ENCODE measurements at regions of chr2 and their contacts with region 1.

Region 1: DNA sequence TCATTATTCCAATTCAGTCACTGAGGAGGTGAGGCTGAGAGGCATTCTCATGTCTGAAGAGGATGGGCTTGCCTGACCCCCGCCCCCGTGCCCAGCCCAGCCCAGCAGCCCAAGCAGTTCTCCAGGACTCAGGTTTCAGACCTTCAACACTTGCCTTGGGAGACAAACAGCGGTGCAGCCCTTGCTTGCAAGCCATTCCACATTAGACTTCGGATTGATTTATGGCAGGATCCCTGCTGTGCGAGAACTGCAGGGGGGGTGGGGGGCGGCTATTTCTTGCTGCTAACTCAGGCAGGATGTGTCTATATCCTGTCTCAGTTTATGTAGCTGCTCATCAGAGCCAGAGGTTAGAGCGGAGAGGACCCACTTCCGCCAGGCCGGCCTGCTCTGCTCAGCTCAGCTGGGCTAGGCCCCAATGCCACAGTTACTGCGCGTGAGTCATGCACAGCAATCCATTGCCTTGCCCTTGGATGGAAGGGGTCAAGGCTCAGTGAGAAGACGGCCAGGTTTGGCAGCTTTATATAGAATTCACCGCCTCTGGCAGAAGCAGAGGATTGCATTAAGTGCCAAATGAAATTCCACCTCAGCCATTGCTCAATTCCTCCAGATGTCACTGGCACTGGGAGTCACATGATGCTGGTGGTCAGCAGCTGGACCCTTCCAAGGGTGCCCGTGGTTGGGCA is 1.8 kb downstream of the GYPC start:
- DNase-seq: peak; percentile 87
- H3K4me3 Mint-ChIP-seq: peak overlapping the region; percentile 85
- H3K27ac Mint-ChIP-seq: peak overlapping the region; percentile 93
- H3K4me1 Mint-ChIP-seq: peaks cover 60% of the 10 kb centered on the region
- H3K27me3 Mint-ChIP-seq: no peaks in the 10 kb centered on the region

Region 2: DNA sequence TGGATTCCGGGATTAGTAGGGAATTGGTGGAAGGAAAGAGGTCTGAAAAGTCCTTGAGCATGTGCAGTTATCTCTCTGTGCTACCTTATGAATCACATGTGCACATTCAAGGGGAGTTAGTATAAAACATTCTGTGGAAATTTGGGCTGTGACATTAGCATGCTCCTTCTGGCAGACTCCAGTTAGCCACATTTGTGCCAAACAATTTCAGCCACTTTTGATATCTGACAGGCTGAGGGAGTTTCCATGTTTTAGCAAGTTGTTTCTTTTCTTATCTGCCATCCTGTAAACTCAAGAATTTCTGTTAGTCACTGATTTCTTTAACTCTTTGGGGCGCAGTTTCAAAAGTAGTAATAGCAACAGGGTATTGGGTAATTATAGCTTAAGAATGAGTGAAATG is 30.1 kb before region 1 on chr2:
- CTCF ChIA-PET with region 1: no interaction called
- POLR2A ChIA-PET with region 1: no interaction called
- DNase-seq: no peak
- H3K4me3 Mint-ChIP-seq: no peak overlapping the region
- H3K27ac Mint-ChIP-seq: no peak overlapping the region
- H3K4me1 Mint-ChIP-seq: no peaks in the 10 kb centered on the region
- H3K27me3 Mint-ChIP-seq: peaks cover 22% of the 10 kb centered on the region

Region 3: DNA sequence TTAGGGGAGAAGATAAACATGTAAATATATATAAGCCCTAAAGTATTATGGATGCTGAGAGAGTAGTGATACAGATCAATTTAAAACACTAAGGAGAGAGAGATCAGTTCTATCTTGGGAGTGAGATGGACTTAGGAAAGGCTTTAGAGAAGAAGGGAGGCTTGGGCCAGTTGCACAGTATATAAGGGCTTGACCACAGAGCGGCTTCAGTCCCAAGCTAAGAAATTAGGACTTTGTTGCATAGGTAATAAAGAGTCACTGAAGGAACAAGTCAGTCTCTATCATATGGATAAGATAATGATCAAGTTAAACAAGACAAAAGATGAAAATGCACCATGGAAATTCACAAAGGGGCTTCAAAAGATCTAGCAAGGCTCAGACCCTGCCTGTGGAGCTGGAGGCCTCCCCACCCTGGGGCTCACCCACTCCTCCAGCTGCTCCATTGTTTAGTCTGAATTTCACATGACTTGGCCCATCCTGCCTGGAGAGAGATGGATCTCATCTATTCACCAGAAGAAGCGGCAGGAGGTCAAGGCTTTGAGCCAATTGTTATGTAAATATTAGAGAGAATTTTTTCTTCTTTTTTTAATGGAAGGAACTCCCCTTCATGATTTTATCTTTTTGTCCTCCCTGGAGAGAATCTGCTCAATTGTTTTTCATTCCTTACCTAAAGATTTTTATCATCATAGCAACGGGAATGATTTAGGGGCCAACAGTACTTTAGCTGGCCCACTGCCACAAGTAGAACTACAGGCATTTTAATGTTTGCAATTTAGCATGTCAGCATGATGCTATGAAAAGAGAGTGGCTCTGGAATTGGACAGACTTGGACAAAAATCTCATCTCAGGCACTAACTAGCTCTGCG is 42.2 kb after region 1 on chr2:
- CTCF ChIA-PET with region 1: no interaction called
- POLR2A ChIA-PET with region 1: no interaction called
- DNase-seq: no peak
- H3K4me3 Mint-ChIP-seq: no peak overlapping the region
- H3K27ac Mint-ChIP-seq: no peak overlapping the region
- H3K4me1 Mint-ChIP-seq: peaks cover 2% of the 10 kb centered on the region
- H3K27me3 Mint-ChIP-seq: no peaks in the 10 kb centered on the region

Region 4: GRCh38 chr2:126723281-126723815 is 65.6 kb after region 1 on chr2:
- CTCF ChIA-PET with region 1: no interaction called
- POLR2A ChIA-PET with region 1: no interaction called
- DNase-seq: no peak
- H3K4me3 Mint-ChIP-seq: no peak overlapping the region
- H3K27ac Mint-ChIP-seq: no peak overlapping the region
- H3K4me1 Mint-ChIP-seq: no peaks in the 10 kb centered on the region
- H3K27me3 Mint-ChIP-seq: peaks cover 18% of the 10 kb centered on the region

Region 5: GRCh38 chr2:126761981-126762878 is 104.5 kb after region 1 on chr2:
- CTCF ChIA-PET with region 1: interaction called, 3 read pairs
- POLR2A ChIA-PET with region 1: interaction called, 12 read pairs
- DNase-seq: peak; percentile 78
- H3K4me3 Mint-ChIP-seq: peak overlapping the region; percentile 26
- H3K27ac Mint-ChIP-seq: peak overlapping the region; percentile 78
- H3K4me1 Mint-ChIP-seq: peaks cover 39% of the 10 kb centered on the region
- H3K27me3 Mint-ChIP-seq: peaks cover 19% of the 10 kb centered on the region

Measured in activated CD4-positive, alpha-beta memory T cell treated with anti-CD3 and anti-CD28 coated beads, Interleukin-2, amount 10 ng/mL, durations not matched to agents 7 days and 5 days (primary cell).